K562 (cell line): ENCODE measurements at regions of chrX and their contacts with region 1.

Region 1: GRCh38 chrX:53281321-53281822 is at the start of gene IQSEC2:
- DNase-seq: peak; percentile 74 to 91 (median 78)
- ATAC-seq: peak; percentile 89
- H3K4me3 ChIP-seq: peak within 1 kb of the TSS; percentile 52
- H3K27ac ChIP-seq: peak within 1 kb of the TSS; percentile 39
- H3K4me1 ChIP-seq: peaks cover 11 to 39% of the 10 kb centered on the region in 2 experiments; a peak in 4 of 5 replicates
- H3K27me3 ChIP-seq: no peaks in the 10 kb centered on the region
- CTCF ChIP-seq: no peak
- EP300 ChIP-seq: no peak
- POLR2A ChIP-seq: peak; percentile 9; the same call in 1 of the 2 replicates
- RAD21 ChIP-seq: no peak
- polyA plus RNA-seq, gene IQSEC2: 2.7 to 2.8 TPM

Region 2: GRCh38 chrX:53239474-53239873 is 41.9 kb before region 1 on chrX:
- CTCF ChIA-PET with region 1: no interaction called
- POLR2A ChIA-PET with region 1: no interaction called
- in situ Hi-C with region 1: no loop called
- intact Hi-C with region 1: no loop called
- DNase-seq: peak in 3 of 4 experiments; percentile 36 to 44 (median 41)
- ATAC-seq: peak; percentile 87
- H3K4me3 ChIP-seq: no peak overlapping the region
- H3K27ac ChIP-seq: no peak overlapping the region
- H3K4me1 ChIP-seq: 0 out of 5 replicates have a peak, but pooled peaks cover 0 to under 1% of the 10 kb centered on the region in 2 experiments
- H3K27me3 ChIP-seq: no peaks in the 10 kb centered on the region
- CTCF ChIP-seq: peak in 2 of 3 experiments; percentile 31 to 37; a peak in 2 of 6 replicates
- EP300 ChIP-seq: no peak
- POLR2A ChIP-seq: no peak
- RAD21 ChIP-seq: no peak

Region 3: GRCh38 chrX:53255738-53256191 is 25.6 kb before region 1 on chrX:
- CTCF ChIA-PET with region 1: no interaction called
- POLR2A ChIA-PET with region 1: interaction called, 4 read pairs
- in situ Hi-C with region 1: no loop called
- intact Hi-C with region 1: loop called (anchors 2 kb)
- DNase-seq: peak; percentile 90 to 92 (median 92)
- ATAC-seq: peak; percentile 84
- H3K4me3 ChIP-seq: peak overlapping the region; percentile 49
- H3K27ac ChIP-seq: peak overlapping the region; percentile 85
- H3K4me1 ChIP-seq: peaks cover 33 to 44% of the 10 kb centered on the region in 2 experiments; a peak in 4 of 5 replicates
- H3K27me3 ChIP-seq: no peaks in the 10 kb centered on the region
- CTCF ChIP-seq: no peak
- EP300 ChIP-seq: peak; percentile 86; the same call in 1 of the 2 replicates
- POLR2A ChIP-seq: peak; percentile 60
- RAD21 ChIP-seq: no peak; a peak in 1 of 4 replicates

Region 4: GRCh38 chrX:53330331-53330730 is 49.0 kb after region 1 on chrX:
- CTCF ChIA-PET with region 1: no interaction called
- POLR2A ChIA-PET with region 1: no interaction called
- in situ Hi-C with region 1: no loop called
- intact Hi-C with region 1: no loop called
- DNase-seq: no peak
- ATAC-seq: no peak
- H3K4me3 ChIP-seq: no peak overlapping the region
- H3K27ac ChIP-seq: no peak overlapping the region
- H3K4me1 ChIP-seq: no peaks in the 10 kb centered on the region; a peak in 1 of 5 replicates
- H3K27me3 ChIP-seq: peaks cover 8 to 56% of the 10 kb centered on the region in 2 experiments; a peak in 3 of 5 replicates
- CTCF ChIP-seq: no peak
- EP300 ChIP-seq: no peak
- POLR2A ChIP-seq: no peak
- RAD21 ChIP-seq: no peak